ENCODE measurements at regions of chr11 and their contacts with region 1.

Region 1: GRCh38 chr11:59429924-59430516 is 3.8 kb upstream of the OR5A2 start:
- DNase-seq: peak; percentile 78
- H3K4me3 ChIP-seq: no peak overlapping the region
- H3K27ac ChIP-seq: no peak overlapping the region
- H3K4me1 ChIP-seq: no peaks in the 10 kb centered on the region
- CTCF ChIP-seq: peak; percentile 96

Region 2: GRCh38 chr11:59158206-59159068 is 271.6 kb before region 1 on chr11:
- CTCF ChIA-PET with region 1: no interaction called
- POLR2A ChIA-PET with region 1: no interaction called
- intact Hi-C with region 1: no loop called
- DNase-seq: peak; percentile 81
- H3K4me3 ChIP-seq: no peak overlapping the region
- H3K27ac ChIP-seq: no peak overlapping the region
- H3K4me1 ChIP-seq: no peaks in the 10 kb centered on the region
- CTCF ChIP-seq: peak; percentile 95

Region 3: GRCh38 chr11:59171508-59172322 is 258.3 kb before region 1 on chr11 and contains the start of gene DTX4:
- CTCF ChIA-PET with region 1: no interaction called
- POLR2A ChIA-PET with region 1: no interaction called
- intact Hi-C with region 1: loop called (anchors 1 kb)
- DNase-seq: peak; percentile 92
- H3K4me3 ChIP-seq: peak within 1 kb of the TSS; percentile 77
- H3K27ac ChIP-seq: peak within 1 kb of the TSS; percentile 31
- H3K4me1 ChIP-seq: peaks cover 11% of the 10 kb centered on the region
- CTCF ChIP-seq: peak; percentile 88
- total RNA-seq, gene DTX4: 0.70 and 1.4 TPM in 2 replicates

Region 4: DNA sequence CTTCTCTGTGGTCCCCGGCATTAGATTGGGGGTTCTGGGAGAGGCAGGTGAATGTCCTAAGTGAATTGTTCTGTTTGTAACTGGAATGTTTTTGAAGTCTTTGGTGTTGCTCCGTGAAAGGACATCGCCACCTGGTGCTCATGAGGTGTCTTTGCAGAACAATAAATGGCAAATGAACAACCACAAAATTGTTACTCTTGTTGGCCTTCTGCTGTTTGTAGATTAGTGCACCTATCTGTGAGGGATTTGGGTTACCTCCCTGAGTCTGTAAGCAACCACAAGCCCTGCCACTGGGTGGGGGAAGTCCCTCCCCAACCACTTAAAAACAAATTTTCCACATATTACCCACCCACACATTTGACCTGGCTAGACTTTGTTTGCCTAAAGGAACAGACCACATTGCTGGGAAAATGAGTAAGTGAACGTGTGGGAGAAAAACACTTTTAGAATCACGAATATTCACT is 222.0 kb before region 1 on chr11:
- CTCF ChIA-PET with region 1: no interaction called
- POLR2A ChIA-PET with region 1: no interaction called
- intact Hi-C with region 1: loop called (anchors 1 kb)
- DNase-seq: peak; percentile 68
- H3K4me3 ChIP-seq: no peak overlapping the region
- H3K27ac ChIP-seq: no peak overlapping the region
- H3K4me1 ChIP-seq: peaks cover 16% of the 10 kb centered on the region
- CTCF ChIP-seq: peak; percentile 89

Region 5: GRCh38 chr11:59263225-59263894 is 166.7 kb before region 1 on chr11:
- CTCF ChIA-PET with region 1: no interaction called
- POLR2A ChIA-PET with region 1: no interaction called
- intact Hi-C with region 1: loop called (anchors 1 kb)
- DNase-seq: peak; percentile 84
- H3K4me3 ChIP-seq: no peak overlapping the region
- H3K27ac ChIP-seq: no peak overlapping the region
- H3K4me1 ChIP-seq: peaks cover 56% of the 10 kb centered on the region
- CTCF ChIP-seq: peak; percentile 92

Region 6: GRCh38 chr11:59368238-59369022 is 61.6 kb before region 1 on chr11:
- CTCF ChIA-PET with region 1: no interaction called
- POLR2A ChIA-PET with region 1: no interaction called
- intact Hi-C with region 1: no loop called
- DNase-seq: no peak
- H3K4me3 ChIP-seq: no peak overlapping the region
- H3K27ac ChIP-seq: no peak overlapping the region
- H3K4me1 ChIP-seq: no peaks in the 10 kb centered on the region
- CTCF ChIP-seq: no peak

Region 7: GRCh38 chr11:59680287-59681154 is 250.5 kb after region 1 on chr11:
- CTCF ChIA-PET with region 1: no interaction called
- POLR2A ChIA-PET with region 1: no interaction called
- intact Hi-C with region 1: loop called (anchors 10 kb)
- DNase-seq: peak; percentile 78
- H3K4me3 ChIP-seq: no peak overlapping the region
- H3K27ac ChIP-seq: no peak overlapping the region
- H3K4me1 ChIP-seq: no peaks in the 10 kb centered on the region
- CTCF ChIP-seq: peak; percentile 92